Pancreas (tissue), 10 donors: ENCODE measurements at regions of chr12 and their contacts with region 1.

Region 1: DNA sequence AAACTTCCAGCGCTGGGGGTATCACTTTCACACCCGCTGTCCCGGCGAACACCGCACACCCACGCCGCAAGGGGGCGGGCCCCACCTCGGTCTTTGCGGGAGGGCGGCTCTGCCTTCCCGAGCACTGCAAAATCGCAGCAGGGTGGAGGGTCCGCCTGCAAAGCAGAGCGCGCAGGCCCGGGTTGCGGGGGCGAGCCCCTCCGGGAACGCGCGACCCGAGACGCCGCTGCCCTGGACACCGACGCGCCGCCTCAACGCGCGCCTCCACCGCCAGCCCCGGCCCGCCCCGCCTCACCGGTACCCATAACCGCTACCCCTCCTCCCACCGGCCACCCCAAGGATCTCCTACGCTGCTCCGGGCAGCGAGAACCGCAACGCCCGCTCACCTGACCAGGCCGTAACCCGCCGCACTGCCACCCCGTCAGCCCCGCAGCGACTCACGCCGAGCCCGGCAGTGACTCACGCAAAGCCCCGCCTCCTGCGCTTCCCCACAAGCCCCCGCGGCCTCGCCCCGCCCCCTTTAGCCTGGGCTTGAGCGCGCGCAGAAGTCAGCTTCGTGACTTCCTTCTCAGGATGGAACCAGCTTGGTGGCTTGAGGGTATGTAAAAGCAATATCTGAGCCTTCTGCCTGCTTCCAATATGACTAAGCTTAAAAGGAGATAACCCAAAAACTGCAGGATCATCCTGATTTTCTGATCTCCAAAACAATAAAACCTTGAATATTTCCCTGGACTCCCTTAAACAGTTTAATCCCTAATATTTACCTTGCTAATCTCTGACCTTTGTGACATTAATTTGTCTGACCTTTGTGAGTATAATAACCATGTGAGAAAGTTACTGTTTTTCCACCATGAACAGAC is at the start of gene RPAP3:
- DNase-seq: peak; percentile 96 to 99 (median 98)
- ATAC-seq: peak; percentile 98 to 99 (median 99)
- H3K4me3 ChIP-seq: peak within 1 kb of the TSS; percentile 90 to 93 (median 92)
- H3K27ac ChIP-seq: peak within 1 kb of the TSS; percentile 81 to 87 (median 84)
- H3K4me1 ChIP-seq: peaks cover 0 to 11% (median 0%) of the 10 kb centered on the region in 3 donors
- H3K27me3 ChIP-seq: no peaks in the 10 kb centered on the region
- CTCF ChIP-seq: peak; percentile 31 to 59 (median 48)
- total RNA-seq, gene RPAP3: 6.0 to 12.1 (median 9.2) TPM

Region 2: GRCh38 chr12:47276621-47277309 is 429.0 kb before region 1 on chr12:
- intact Hi-C with region 1: no loop called
- DNase-seq: peak in 3 of 6 donors; percentile 21 to 36 (median 24)
- ATAC-seq: peak; percentile 82 to 91 (median 89)
- H3K4me3 ChIP-seq: no peak overlapping the region
- H3K27ac ChIP-seq: peak overlapping the region in 2 of 4 donors; percentile 7 to 41
- H3K4me1 ChIP-seq: peaks cover 0 to 9% (median 0%) of the 10 kb centered on the region in 3 donors
- H3K27me3 ChIP-seq: no peaks in the 10 kb centered on the region
- CTCF ChIP-seq: no peak

Region 3: DNA sequence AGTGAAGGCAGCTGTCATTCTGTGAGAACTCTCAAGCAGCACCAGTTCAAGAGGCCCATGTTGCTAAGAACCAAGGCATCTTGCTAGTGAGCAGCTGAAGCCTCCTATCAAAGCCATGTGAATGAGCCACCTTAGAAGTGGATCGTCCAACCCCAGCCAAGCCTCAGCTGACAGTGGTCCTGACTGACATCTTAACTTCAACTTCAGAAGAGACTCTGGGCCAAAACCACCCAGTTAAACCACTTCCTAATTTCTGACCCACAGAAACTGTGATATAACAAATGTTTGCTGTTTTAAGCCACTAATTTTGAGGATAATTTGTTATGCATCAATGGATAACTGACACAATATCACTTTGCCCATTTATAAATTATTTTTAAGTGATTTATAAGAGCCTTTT is 256.0 kb before region 1 on chr12:
- intact Hi-C with region 1: no loop called
- DNase-seq: no peak
- ATAC-seq: no peak
- H3K4me3 ChIP-seq: no peak overlapping the region
- H3K27ac ChIP-seq: no peak overlapping the region
- H3K4me1 ChIP-seq: no peaks in the 10 kb centered on the region
- H3K27me3 ChIP-seq: no peaks in the 10 kb centered on the region
- CTCF ChIP-seq: no peak

Region 4: DNA sequence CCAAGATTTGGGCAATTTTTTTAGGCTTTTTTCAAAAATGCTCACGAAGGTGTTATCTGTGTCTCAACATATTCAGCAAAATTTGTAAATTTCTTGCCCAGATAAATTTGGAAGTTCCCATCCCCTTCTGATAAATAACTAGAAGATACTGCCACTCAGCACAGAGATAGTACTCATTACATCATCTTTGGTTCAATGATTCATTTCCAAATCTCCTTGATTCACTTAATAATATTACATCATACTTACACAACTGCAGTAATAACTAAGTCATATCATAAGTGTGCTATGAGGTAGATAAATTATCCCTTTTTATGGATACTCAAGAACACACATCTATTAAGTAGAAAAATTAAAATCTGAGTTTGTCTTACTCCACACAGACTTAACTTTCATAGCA is 89.4 kb before region 1 on chr12:
- intact Hi-C with region 1: no loop called
- DNase-seq: no peak
- ATAC-seq: no peak
- H3K4me3 ChIP-seq: no peak overlapping the region
- H3K27ac ChIP-seq: no peak overlapping the region
- H3K4me1 ChIP-seq: no peaks in the 10 kb centered on the region
- H3K27me3 ChIP-seq: no peaks in the 10 kb centered on the region
- CTCF ChIP-seq: no peak

Region 5: DNA sequence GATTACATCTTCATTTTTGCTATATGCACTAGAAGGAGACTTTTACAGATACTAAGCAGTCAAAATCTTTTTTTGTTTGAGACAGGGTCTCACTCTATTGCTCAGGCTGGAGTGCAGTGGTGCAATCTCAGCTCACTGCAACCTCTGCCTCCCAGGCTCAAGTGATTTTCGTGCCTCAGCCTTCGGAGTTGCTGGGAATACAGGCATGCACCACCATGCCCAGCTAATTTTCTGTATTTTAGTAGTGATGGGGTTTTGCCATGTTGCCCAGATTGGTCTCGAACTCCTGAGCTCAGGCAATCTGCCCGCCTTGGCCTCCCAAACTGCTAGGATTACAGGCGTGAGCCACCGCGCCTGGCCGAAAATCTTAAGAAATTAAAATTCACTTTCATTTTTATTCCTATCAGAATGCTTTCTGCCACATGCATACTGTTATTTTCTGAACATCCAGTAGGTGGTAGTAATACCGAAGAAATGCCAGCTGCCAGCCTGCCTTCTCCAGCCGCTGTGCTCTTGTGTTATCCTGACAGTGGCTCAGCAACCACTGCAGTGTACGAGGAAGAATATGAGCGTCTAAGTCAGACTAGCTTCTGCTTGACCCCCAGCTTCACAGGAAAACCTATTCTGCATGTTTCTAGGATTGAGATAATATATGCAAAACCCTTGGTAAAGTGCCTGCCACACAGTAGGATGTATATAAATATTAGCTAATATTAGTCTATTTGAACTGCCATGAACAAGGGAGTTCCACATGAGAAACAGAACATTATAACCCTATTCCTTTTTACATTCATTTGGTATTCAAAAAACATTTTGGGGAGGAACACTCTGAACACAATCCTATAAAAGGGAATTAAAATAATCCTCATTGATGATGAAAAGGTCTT is 54.2 kb before region 1 on chr12:
- intact Hi-C with region 1: loop called in 1 of 3 experiments (anchors 10 kb)
- DNase-seq: peak; percentile 33 to 63 (median 56)
- ATAC-seq: peak; percentile 84 to 98 (median 97)
- H3K4me3 ChIP-seq: peak overlapping the region in 1 of 4 donors; percentile 26
- H3K27ac ChIP-seq: peak overlapping the region in 1 of 4 donors; percentile 55
- H3K4me1 ChIP-seq: peaks cover 0 to 16% (median 0%) of the 10 kb centered on the region in 3 donors
- H3K27me3 ChIP-seq: no peaks in the 10 kb centered on the region
- CTCF ChIP-seq: peak; percentile 39 to 68 (median 60)

Region 6: DNA sequence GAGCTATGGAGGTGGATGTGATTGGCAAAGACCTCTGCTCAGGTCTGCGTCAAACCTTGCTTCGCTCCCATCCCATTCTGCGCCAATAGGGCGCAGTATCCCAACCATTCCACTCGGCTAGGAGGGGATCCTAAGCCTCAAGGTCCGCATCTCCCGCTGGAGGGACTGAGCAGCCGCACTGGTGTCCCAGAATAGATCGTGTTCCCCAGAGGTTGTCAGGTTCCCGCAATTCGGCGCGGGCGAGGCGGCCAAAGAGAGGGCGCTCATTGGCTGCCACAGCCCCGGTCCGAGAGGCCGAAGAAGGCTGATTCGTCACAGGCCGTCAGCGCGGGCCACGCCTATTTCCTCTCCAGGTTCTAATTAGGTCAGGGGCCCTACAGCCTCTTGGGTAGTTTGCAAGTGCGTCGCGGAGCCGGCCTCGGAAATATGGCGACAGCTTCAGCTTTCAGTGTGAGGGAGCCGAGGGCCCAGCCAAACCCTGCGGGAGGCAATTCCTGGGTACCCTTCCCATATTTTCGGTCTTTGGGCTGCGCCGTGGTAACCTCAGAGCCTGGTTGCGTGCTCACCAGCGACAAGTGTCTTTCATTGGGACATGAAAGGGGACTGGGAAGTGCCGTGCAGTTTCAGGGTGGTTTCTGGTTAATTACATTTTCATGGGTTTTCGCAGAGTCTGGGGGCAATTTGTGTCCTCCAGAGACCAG is 492.3 kb after region 1 on chr12:
- intact Hi-C with region 1: no loop called
- DNase-seq: peak; percentile 95 to 97 (median 95)
- ATAC-seq: peak; percentile 98 to 100 (median 99)
- H3K4me3 ChIP-seq: peak overlapping the region; percentile 24 to 74 (median 46)
- H3K27ac ChIP-seq: peak overlapping the region; percentile 75 to 96 (median 94)
- H3K4me1 ChIP-seq: peaks cover 0 to 9% (median 4%) of the 10 kb centered on the region in 3 donors
- H3K27me3 ChIP-seq: no peaks in the 10 kb centered on the region
- CTCF ChIP-seq: no peak